Head of caudate nucleus (tissue), 42 donors: ENCODE measurements at regions of chr16 and their contacts with region 1.

Region 1: GRCh38 chr16:74724820-74725549 is 24.3 kb upstream of the MLKL start:
- DNase-seq: peak; percentile 86 to 99 (median 95)

Region 2: DNA sequence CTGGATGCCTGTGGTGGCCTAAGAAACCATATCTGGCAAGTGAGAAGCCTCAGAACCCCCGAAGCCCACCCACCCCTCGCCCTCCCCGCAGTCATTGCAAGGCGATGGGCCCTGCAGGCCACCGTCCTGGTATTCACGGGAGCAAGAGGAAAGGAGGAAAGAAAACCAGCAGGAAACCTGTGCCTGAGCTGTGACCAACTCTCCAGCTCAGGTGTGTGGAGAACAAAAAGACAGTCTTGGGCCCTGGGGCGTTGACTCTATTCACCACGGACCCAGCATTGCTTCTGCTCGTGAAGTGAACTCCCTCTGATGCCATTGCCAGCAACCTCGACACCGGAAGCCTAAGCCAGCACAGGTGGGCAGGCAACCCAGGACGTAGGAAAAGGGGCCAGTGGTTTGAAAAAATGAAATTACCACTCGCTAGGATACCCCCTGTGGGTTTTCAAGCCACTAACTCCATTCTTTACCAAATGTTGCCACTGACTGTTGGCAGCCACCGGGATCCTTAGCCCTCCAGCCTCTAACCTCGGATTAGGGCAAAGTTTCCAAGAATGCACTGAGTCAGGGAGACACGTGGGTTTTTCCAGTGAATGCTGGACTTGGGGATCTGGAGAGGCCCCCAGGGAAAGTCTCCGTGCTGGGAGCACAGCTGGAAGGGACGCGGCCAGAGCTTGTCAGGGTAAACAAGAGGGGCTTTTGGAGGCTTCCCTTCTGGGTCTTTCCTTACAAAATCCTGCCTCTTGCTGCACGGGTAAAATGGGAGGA is 24.5 kb after region 1 on chr16:
- intact Hi-C with region 1: loop called (anchors 2 kb)
- DNase-seq: peak in 4 of 42 donors; percentile 28 to 43 (median 35)

Region 3: GRCh38 chr16:74774203-74775116 is 49.5 kb after region 1 on chr16 and contains the start of gene FA2H:
- intact Hi-C with region 1: loop called (anchors 1 kb)
- DNase-seq: peak; percentile 80 to 97 (median 93)